ENCODE measurements at regions of chr17 and their contacts with region 1.

Region 1: GRCh38 chr17:47889734-47890529 is 6.1 kb upstream of the SP2 start:
- DNase-seq: peak; percentile 87 to 89
- ATAC-seq: peak; percentile 85 to 94 (median 92)
- H3K4me3 ChIP-seq: no peak overlapping the region
- H3K27ac ChIP-seq: no peak overlapping the region
- H3K4me1 ChIP-seq: peaks cover 0 to 17% (median 8%) of the 10 kb centered on the region in 9 donors
- H3K27me3 ChIP-seq: no peaks in the 10 kb centered on the region
- CTCF ChIP-seq: peak; percentile 93 to 98 (median 96)

Region 2: DNA sequence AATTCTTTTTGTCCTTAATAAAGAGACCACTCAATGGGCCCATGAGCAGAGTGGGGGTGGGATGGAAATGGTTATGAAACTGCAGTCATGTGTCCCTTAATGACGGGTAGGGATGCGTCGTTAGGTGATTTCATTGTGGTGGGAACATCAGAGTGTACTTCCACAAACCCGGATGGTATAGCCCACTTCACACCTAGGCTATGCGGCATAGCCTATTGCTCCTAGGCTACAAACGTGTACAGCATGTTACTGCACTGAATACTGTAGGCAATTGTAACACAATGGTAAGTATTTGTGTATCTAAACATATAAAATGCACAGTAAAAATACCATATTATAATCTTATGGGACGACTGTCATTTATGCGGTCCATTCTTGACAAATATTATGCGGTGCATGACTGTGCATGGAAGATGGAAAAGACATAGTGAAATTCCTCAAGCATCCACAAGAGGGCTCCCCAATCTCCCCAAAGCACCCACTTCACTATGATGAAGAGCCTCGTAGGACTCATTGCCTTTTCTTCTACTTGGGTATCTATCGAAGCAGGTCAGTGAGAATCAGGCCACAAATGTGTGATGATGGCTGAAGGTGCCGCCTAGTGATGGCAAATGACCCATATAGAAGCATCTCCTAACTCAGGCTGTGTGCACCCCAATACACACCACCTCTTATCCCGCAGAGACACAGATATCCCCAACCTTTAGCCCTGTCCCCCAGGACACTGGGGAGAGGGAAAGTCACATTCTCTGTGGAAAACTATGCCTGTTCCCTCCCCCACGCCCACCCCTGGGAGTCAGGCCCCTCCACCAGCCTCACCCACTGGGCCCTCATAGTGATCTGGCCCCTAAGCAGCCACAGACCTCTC is 113.4 kb before region 1 on chr17:
- intact Hi-C with region 1: loop called in 1 of 10 experiments (anchors 5 kb)
- DNase-seq: no peak
- ATAC-seq: peak in 1 of 8 donors; percentile 35
- H3K4me3 ChIP-seq: no peak overlapping the region
- H3K27ac ChIP-seq: no peak overlapping the region
- H3K4me1 ChIP-seq: peaks cover 0 to 4% (median 0%) of the 10 kb centered on the region in 9 donors
- H3K27me3 ChIP-seq: peaks cover 20 to 83% (median 75%) of the 10 kb centered on the region in 7 donors
- CTCF ChIP-seq: peak; percentile 43 to 76 (median 62)

Region 3: GRCh38 chr17:47850692-47851573 is 39.0 kb before region 1 on chr17 and contains the start of gene SP6:
- intact Hi-C with region 1: loop called in 1 of 10 experiments (anchors 2 kb)
- DNase-seq: peak; percentile 36 to 55
- ATAC-seq: peak; percentile 69 to 87 (median 80)
- H3K4me3 ChIP-seq: peak within 1 kb of the TSS; percentile 6 to 54 (median 45)
- H3K27ac ChIP-seq: peak within 1 kb of the TSS in 1 of 10 donors; percentile 68
- H3K4me1 ChIP-seq: peaks cover 5 to 45% (median 13%) of the 10 kb centered on the region in 9 donors
- H3K27me3 ChIP-seq: peaks cover 27 to 100% (median 91%) of the 10 kb centered on the region in 7 donors
- CTCF ChIP-seq: peak in 5 of 9 donors; percentile 13 to 52 (median 44)
- total RNA-seq, gene SP6: 0.05 to 0.51 (median 0.20) TPM

Region 4: GRCh38 chr17:48084932-48085444 is 195.1 kb after region 1 on chr17:
- intact Hi-C with region 1: no loop called
- DNase-seq: no peak
- ATAC-seq: no peak
- H3K4me3 ChIP-seq: no peak overlapping the region
- H3K27ac ChIP-seq: no peak overlapping the region
- H3K4me1 ChIP-seq: peaks cover 0 to 22% (median 13%) of the 10 kb centered on the region in 9 donors
- H3K27me3 ChIP-seq: no peaks in the 10 kb centered on the region
- CTCF ChIP-seq: no peak

Measured in heart right ventricle (tissue), 16 donors.